Activated T-helper 2 cell treated with anti-CD3 and anti-CD28 coated beads, Interferon-gamma antibody, Interleukin-2, Interleukin-4, amounts not matched to agents 10 μg/mL and 5 μg/mL and 100 μg/mL, durations not matched to agents 14 hours and 24 hours and 36 hours (primary cell): ENCODE measurements at regions of chr5 and their contacts with region 1.

Region 1: DNA sequence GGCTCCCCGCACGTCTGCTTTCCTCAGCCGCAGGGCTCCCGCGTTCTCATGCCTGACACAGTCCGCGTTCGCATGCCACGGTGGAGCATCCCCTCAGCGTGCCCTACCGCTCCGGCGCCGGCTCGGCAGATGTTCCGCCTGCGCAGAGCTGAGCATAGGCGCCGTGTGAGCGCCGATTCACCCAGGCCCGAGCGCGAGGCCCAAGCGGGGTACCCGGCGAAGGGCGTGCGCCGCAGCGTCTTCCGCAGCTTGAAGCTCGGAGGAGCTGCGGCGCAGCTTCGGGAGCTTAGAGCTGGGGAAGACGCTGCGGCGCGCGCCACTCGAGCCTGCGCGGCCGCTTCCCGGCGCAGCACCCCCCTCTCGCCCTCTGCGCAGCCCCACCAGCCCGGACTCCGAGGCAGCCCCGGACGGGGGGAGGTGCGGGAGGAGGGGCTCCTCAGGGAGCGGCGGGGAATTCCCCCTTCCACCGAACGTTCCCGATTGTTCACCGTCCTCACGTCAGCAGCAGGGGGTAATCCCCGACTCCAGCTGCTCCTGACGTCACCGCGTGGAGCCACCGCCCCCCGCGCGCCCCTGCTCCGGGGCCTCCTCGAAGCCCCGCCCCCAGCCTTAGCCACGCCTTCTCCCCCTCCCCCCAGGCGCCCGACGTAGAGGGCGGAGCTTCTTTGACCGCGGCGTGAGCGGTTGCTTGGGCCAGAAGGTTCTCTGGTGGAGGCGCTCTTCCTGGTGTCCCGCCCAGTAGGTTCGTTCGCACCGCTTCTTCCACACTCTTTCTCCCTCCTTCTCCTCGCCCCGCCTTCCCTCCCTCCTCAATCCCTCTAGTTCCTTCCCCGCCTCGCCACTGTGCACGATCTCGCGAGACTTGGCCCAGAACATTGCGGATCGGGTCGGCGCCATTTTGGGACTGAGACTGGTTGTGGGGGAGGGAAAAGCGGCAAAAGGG is at the start of gene GPBP1:
- DNase-seq: peak; percentile 96
- H3K4me3 Mint-ChIP-seq: peak within 1 kb of the TSS; percentile 96
- H3K27ac Mint-ChIP-seq: peak within 1 kb of the TSS; percentile 99
- H3K4me1 Mint-ChIP-seq: peaks cover 33% of the 10 kb centered on the region
- H3K27me3 Mint-ChIP-seq: no peaks in the 10 kb centered on the region
- total RNA-seq, gene GPBP1: 87.4 and 92.0 TPM in 2 replicates

Region 2: DNA sequence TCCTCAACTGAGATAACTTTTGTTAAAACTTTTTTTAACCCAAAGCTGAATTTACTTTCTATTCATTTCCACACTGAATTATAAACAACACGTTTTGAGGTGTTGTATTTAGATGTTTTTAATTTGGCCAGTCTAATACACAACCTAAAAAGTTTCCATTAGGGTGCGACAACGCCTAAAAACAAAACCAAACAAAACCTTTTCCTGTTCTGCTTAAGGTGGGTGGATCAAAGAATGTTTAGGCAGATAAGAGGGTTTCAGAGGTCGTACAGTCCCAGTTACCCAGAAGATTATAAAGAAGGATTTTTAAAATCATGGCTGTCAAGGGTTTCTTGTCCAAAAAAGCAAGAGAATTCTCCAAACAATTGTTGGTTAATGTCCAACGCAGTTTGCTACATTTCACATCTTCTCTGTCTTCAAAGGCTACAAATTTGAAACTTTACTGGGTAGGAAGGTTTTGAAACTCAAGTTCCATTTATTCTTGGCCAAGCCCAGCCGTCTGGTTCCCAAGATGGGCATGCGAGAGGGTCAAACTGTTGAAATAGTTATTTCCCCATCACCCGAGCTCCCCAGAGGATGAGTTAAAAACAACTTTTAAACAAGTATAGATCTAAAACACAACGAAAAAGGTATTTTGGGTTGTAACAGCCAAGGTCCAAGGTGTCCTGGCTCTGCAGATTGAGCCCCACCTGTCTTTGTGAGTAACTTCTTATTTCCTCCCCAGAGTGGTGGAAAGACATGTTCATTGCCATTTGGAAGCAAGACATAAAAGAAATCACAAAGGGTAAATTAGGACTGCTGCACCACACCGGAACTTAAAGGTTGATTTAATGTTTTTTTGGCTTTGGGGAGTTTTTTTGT is 480.9 kb before region 1 on chr5:
- intact Hi-C with region 1: loop called (anchors 5 kb)
- DNase-seq: no peak
- H3K4me3 Mint-ChIP-seq: peak overlapping the region; percentile 28
- H3K27ac Mint-ChIP-seq: peak overlapping the region; percentile 30
- H3K4me1 Mint-ChIP-seq: peaks cover 62% of the 10 kb centered on the region
- H3K27me3 Mint-ChIP-seq: no peaks in the 10 kb centered on the region

Region 3: GRCh38 chr5:56951946-56952691 is 221.3 kb before region 1 on chr5 and contains the start of gene MIER3:
- intact Hi-C with region 1: loop called (anchors 2 kb)
- DNase-seq: peak; percentile 77
- H3K4me3 Mint-ChIP-seq: peak within 1 kb of the TSS; percentile 97
- H3K27ac Mint-ChIP-seq: peak within 1 kb of the TSS; percentile 82
- H3K4me1 Mint-ChIP-seq: peaks cover 23% of the 10 kb centered on the region
- H3K27me3 Mint-ChIP-seq: peaks cover 40% of the 10 kb centered on the region
- total RNA-seq, gene MIER3: 24.1 and 28.3 TPM in 2 replicates

Region 4: DNA sequence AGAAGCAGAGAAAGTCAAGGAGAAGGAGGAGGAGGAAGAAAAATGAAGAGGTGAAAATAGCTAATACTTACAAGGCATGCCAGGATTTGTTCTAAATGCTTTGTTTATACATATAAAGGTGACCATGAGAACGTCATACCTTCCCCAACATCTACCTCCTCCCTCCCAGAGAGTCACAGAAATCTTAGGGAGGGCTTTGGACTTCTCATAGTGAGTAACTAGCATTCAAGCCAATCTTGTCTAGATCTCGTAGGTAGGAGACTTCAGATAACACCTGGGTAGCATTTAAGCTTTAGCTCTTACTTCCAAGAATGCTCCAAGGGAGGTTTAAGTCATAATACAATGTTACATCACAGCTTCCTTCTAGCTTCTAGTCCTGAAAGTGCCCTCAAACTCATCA is 36.1 kb before region 1 on chr5:
- intact Hi-C with region 1: loop called (anchors 5 kb)
- DNase-seq: no peak
- H3K4me3 Mint-ChIP-seq: no peak overlapping the region
- H3K27ac Mint-ChIP-seq: no peak overlapping the region
- H3K4me1 Mint-ChIP-seq: no peaks in the 10 kb centered on the region
- H3K27me3 Mint-ChIP-seq: peaks cover 14% of the 10 kb centered on the region

Region 5: DNA sequence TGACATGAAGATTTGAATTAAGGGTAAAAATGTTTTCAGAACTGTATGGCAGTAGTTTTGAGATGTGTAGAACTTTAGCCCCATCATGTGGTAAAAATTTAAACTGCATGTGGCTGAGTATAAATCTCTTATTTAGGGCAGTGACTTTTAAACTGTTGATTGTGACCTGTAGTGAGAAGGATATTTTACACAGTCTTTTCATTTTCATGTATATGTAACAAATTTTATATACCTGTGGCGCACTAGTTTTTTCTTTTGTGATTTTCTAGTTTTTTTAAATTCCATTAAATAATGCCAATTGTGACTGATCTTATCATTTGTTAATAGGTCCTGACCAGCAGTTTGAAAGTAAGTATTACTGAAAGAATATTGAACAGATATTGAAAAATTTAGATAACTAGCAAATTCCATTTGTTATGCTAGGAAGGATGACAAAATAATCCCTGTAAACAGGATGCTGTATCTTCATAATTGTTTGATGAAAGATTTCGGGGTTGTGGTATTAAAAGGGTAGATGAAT is 47.7 kb after region 1 on chr5:
- intact Hi-C with region 1: loop called (anchors 2 kb)
- DNase-seq: no peak
- H3K4me3 Mint-ChIP-seq: no peak overlapping the region
- H3K27ac Mint-ChIP-seq: peak overlapping the region; percentile 2
- H3K4me1 Mint-ChIP-seq: peaks cover 18% of the 10 kb centered on the region
- H3K27me3 Mint-ChIP-seq: no peaks in the 10 kb centered on the region

Region 6: DNA sequence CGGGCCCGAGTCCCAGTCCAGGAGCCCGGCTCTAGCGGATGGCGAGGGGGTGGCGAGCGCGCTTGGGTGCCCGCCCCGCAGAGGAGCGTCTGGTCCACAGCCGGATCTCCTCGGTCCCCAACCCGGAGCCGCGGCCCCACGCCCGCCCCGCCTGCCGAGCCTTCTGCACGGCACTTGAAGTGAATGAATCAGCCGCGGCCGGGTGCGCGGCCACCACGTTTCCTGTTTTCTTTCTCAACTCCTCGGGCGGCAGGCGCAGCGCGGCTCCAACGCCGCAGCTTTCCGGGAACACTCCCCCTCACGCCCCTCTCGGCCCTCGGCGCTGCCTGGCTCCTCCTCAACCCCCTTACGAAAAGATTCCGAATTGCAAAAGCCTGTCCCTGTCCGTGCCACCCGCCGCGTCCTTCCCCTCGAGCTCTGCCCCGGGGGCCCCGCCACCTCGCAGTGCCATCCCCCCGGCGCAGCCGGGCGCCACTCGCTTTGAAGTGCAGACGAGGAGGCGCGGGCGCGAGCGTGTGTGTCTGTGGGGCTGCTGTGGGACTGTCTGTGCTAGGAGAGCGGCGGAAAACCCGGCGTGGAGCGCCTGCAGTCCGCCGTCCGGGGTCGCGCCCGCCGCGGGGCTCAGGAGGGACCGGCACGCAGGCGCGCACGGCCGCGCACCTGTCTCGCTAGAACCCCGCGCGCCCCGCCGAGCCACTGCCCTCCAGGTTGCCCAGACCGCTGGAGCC is 1866.0 kb after region 1 on chr5:
- intact Hi-C with region 1: loop called (anchors 2 kb)
- DNase-seq: peak; percentile 88
- H3K4me3 Mint-ChIP-seq: peak overlapping the region; percentile 88
- H3K27ac Mint-ChIP-seq: peak overlapping the region; percentile 95
- H3K4me1 Mint-ChIP-seq: peaks cover 50% of the 10 kb centered on the region
- H3K27me3 Mint-ChIP-seq: no peaks in the 10 kb centered on the region